ENCODE measurements at regions of chr2 and their contacts with region 1.

Region 1: GRCh38 chr2:33505966-33506365 is 29.5 kb downstream of the RASGRP3 start:
- DNase-seq: no peak
- CTCF ChIP-seq: no peak

Region 2: GRCh38 chr2:32882816-32883810 is 622.9 kb before region 1 on chr2:
- CTCF ChIA-PET with region 1: no interaction called
- POLR2A ChIA-PET with region 1: no interaction called
- DNase-seq: no peak
- CTCF ChIP-seq: no peak

Region 3: GRCh38 chr2:33426666-33427231 is 79.2 kb before region 1 on chr2:
- CTCF ChIA-PET with region 1: no interaction called
- POLR2A ChIA-PET with region 1: no interaction called
- DNase-seq: no peak
- CTCF ChIP-seq: no peak

Region 4: DNA sequence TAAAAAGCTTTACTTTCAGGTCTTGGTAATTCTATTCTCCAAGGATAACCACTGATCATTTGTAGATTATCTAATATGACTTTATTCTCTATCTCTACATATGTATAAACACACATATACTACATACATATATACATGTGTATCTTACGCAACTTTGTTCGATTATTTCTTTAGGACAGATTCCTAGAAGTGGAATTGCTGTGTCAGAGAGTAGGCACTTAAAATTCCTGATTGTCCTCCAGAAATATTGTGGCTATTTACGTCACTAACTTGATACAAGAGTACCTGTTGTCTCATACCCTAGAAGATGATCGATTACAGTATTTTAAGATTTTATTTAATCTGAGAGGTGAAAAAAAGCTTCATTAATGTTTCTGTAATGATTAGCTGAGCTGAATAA is 35.3 kb after region 1 on chr2:
- CTCF ChIA-PET with region 1: no interaction called
- POLR2A ChIA-PET with region 1: interaction called, 17 read pairs
- DNase-seq: no peak
- CTCF ChIP-seq: no peak